OCI-LY7 (cell line): ENCODE measurements at regions of chr17 and their contacts with region 1.

Region 1: GRCh38 chr17:50865984-50866774 is at the start of gene TOB1:
- DNase-seq: peak; percentile 95
- H3K4me3 ChIP-seq: peak within 1 kb of the TSS; percentile 72
- H3K27ac ChIP-seq: peak within 1 kb of the TSS; percentile 93
- H3K4me1 ChIP-seq: peaks cover 16% of the 10 kb centered on the region
- CTCF ChIP-seq: no peak
- total RNA-seq, gene TOB1: 12.7 and 15.2 TPM in 2 replicates

Region 2: GRCh38 chr17:50853015-50853615 is 13.1 kb before region 1 on chr17:
- CTCF ChIA-PET with region 1: interaction called, 6 read pairs
- POLR2A ChIA-PET with region 1: interaction called, 23 read pairs
- intact Hi-C with region 1: no loop called
- DNase-seq: no peak
- H3K4me3 ChIP-seq: no peak overlapping the region
- H3K27ac ChIP-seq: no peak overlapping the region
- H3K4me1 ChIP-seq: peaks cover 13% of the 10 kb centered on the region
- CTCF ChIP-seq: no peak

Region 3: DNA sequence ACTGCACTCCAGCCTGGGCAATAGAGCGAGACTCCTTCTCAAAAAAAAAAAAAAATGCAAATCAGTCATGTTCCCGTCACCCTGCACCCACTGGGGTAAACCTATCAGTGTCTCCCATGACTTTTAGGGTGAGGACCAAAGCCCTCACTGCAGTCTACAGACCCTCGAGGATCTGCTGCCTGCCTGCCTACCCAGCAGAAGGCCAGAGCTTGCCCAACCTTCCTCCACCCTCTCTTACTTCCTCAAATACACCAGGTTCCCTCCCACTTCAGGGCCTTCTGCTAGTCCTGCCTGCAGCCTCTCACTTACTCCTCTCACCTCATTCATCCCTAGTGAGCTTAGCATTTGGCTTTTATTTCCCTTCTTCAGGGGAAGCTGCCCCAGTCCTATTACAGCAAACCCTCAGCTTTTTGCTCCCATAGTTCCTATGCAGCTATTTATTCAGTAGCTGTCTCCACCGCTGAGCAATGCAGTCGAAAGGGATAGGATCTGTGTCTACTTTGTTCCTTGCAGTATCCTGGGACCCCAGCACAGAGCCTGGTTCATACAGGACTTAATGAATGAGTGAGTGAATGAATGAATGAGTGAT is 17.8 kb after region 1 on chr17:
- CTCF ChIA-PET with region 1: no interaction called
- POLR2A ChIA-PET with region 1: no interaction called
- intact Hi-C with region 1: no loop called
- DNase-seq: peak; percentile 37
- H3K4me3 ChIP-seq: no peak overlapping the region
- H3K27ac ChIP-seq: no peak overlapping the region
- H3K4me1 ChIP-seq: peaks cover 6% of the 10 kb centered on the region
- CTCF ChIP-seq: no peak

Region 4: DNA sequence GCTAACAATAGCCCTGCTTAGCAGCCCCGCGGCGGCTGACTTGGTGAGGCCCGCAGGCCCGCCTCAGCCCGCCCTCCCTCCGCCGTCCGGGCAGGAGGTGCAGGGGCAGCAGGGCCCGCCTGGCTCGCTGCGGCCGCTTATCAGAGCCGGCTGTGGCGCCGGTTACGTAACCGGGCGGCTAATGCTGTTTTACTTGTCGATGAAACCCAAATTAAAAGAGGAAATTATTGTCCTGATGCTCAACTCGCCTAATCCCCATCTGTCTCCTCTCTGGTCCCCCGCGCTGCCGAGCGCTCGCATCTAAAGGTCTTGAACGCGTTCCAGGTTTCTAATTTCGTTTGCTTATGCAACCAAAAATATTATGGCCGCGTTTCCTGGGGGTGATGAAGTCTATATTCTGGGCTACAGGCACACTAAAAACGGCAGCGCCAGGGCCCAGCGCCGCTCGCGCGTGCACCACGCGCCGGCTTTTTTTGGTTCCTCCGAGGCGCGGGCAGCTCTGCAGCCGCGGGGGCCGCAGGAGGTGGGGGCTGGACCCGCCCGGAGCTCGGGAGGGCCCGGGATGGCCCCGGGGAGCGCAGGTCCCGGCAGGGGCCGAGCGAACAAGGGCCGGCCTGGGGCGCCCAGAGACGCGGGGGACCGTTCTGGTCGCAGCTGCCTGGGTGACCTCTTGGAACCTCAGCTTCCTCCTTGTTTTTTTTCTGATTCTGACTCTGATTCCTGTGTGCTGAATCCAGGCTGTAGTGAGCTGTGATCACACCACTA is 65.1 kb after region 1 on chr17:
- CTCF ChIA-PET with region 1: interaction called, 3 read pairs
- POLR2A ChIA-PET with region 1: interaction called, 14 read pairs
- intact Hi-C with region 1: loop called (anchors 1 kb)
- DNase-seq: peak; percentile 74
- H3K4me3 ChIP-seq: peak overlapping the region; percentile 57
- H3K27ac ChIP-seq: peak overlapping the region; percentile 56
- H3K4me1 ChIP-seq: peaks cover 29% of the 10 kb centered on the region
- CTCF ChIP-seq: no peak

Region 5: DNA sequence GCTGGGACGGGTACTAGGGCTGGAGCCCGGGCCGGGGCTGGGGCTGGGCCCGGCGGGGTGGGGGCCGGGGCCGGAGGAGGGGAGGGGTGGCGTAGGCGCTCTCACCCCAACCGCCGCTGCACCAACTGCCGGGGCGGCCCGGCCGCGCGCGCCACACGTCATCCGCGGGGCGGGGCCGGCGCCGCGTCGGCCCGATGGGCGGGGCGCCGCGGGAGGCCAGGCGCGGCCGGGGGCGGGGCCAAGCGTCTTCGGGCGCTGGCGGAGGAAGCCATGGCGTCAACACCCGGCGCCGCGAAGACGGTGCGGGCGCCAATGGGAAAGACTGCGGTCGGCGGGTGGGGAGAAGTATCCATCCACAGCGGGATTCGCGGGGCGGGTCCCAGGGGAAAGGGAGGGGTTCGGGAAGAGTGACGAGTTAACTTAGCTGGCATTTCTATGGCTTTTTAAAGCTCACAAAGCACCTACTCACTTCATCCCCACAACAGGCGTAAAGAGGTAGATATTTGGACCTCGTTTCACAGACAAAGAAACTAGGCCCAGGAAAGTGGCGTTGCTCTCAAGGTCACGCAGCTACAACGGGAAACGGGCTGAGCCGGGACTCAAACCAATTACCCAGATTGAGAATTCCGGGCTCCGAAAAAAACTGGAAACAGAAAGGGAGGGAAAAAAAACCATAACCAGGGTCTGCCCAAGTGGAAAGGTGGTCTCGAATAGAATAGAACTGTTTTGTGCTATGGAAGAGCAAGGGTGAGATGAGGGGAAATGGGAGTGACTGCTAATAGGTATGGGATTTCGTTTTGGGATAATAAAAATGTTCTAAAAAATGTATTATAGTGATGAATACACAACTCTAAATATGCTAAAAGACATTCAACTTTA is 254.8 kb after region 1 on chr17 and contains the start of gene SPAG9:
- CTCF ChIA-PET with region 1: no interaction called
- POLR2A ChIA-PET with region 1: interaction called, 4 read pairs
- intact Hi-C with region 1: loop called (anchors 5 kb)
- DNase-seq: peak; percentile 95
- H3K4me3 ChIP-seq: peak within 1 kb of the TSS; percentile 100
- H3K27ac ChIP-seq: peak within 1 kb of the TSS; percentile 87
- H3K4me1 ChIP-seq: peaks cover 38% of the 10 kb centered on the region
- CTCF ChIP-seq: no peak
- total RNA-seq, gene SPAG9: 61.1 and 78.9 TPM in 2 replicates

Region 6: DNA sequence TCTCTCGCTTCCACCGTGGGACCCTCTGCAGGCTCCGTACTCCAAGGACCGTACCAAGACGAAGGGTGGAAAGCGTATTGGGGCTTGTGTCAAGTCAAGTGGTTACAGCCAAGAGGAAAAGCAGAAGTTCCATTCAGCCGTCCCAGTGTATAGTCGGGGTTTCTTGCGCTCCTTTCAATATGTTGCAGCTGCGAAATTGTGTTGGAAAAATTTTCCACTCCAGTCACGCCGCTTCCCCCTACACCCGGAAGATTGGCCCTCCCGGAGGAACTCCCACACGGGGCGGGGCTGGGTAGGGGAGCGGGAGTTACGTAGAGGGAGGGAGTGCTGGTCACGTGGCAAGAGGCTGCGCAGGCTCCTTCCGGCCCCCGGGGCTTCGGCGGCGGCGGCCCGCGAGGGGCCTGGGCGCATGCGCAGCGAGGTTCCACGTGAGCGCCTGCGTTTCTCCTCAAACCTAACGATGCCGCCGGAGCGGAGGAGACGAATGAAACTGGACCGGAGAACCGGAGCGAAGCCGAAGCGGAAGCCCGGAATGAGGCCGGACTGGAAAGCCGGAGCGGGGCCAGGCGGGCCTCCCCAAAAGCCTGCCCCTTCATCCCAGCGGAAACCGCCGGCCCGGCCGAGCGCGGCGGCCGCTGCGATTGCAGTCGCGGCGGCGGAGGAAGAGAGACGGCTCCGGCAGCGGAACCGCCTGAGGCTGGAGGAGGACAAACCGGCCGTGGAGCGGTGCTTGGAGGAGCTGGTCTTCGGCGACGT is 394.1 kb after region 1 on chr17 and contains the start of gene UTP18:
- CTCF ChIA-PET with region 1: no interaction called
- POLR2A ChIA-PET with region 1: interaction called, 3 read pairs
- intact Hi-C with region 1: loop called (anchors 5 kb)
- DNase-seq: peak; percentile 99
- H3K4me3 ChIP-seq: peak within 1 kb of the TSS; percentile 97
- H3K27ac ChIP-seq: peak within 1 kb of the TSS; percentile 80
- H3K4me1 ChIP-seq: peaks cover 51% of the 10 kb centered on the region
- CTCF ChIP-seq: no peak
- total RNA-seq, gene UTP18: 58.1 and 62.8 TPM in 2 replicates